ENCODE measurements at regions of chr12 and their contacts with region 1.

Region 1: GRCh38 chr12:26651566-26652188 is 181.3 kb downstream of the ITPR2 start:
- DNase-seq: no peak
- ATAC-seq: peak; percentile 61 to 77
- H3K4me3 ChIP-seq: no peak overlapping the region
- H3K27ac ChIP-seq: no peak overlapping the region
- H3K4me1 ChIP-seq: no peaks in the 10 kb centered on the region
- H3K27me3 ChIP-seq: no peaks in the 10 kb centered on the region

Region 2: DNA sequence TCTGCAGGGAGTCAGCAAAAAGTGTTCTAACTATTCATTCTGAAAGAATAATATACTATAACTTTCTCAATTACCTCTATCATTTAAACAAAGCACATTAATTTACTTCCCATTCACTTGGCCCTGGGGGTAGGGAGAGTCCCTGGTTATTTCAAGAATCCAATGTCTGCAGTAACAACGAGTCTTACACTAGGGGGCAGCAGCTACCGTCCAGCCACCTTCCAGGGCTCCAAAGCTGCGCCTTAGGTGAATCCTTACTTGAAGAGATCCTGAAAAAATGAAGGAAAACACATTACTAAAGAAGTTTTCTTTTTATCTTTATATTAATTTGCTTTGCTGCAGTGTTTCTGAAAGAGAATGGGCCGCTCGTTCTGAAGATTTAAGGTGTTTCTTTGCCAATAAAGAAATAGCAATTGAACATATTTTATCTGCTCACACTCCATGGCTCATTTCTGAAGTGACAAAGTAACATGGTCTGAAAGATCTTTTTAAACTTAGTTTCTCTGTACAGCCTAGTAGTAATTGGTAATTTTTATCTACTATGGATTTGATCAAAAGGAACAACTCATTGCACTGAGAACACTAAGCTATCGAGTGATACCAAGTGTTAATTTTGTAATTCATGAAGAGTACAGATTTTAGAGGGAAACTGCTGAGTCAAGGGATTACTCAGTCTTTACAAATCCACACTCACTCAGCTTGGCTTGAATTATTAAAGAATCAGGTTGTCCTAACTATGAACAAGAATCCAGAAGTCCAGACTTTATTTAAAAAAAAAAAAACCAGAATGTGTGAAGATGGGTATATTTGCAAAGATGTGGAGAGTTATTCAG is 554.4 kb before region 1 on chr12:
- intact Hi-C with region 1: loop called in 3 of 4 experiments (anchors 5 to 10 kb)
- DNase-seq: peak; percentile 64 to 81 (median 73)
- ATAC-seq: peak; percentile 94 to 95
- H3K4me3 ChIP-seq: no peak overlapping the region
- H3K27ac ChIP-seq: no peak overlapping the region
- H3K4me1 ChIP-seq: no peaks in the 10 kb centered on the region
- H3K27me3 ChIP-seq: no peaks in the 10 kb centered on the region

Region 3: GRCh38 chr12:26434299-26435068 is 217.2 kb before region 1 on chr12:
- intact Hi-C with region 1: loop called in 1 of 4 experiments (anchors 10 kb)
- DNase-seq: no peak
- ATAC-seq: peak; percentile 57 to 60
- H3K4me3 ChIP-seq: no peak overlapping the region
- H3K27ac ChIP-seq: no peak overlapping the region
- H3K4me1 ChIP-seq: no peaks in the 10 kb centered on the region
- H3K27me3 ChIP-seq: no peaks in the 10 kb centered on the region

Region 4: GRCh38 chr12:26443309-26443708 is 208.4 kb before region 1 on chr12:
- intact Hi-C with region 1: loop called in 2 of 4 experiments (anchors 10 kb)
- DNase-seq: no peak
- ATAC-seq: no peak
- H3K4me3 ChIP-seq: no peak overlapping the region
- H3K27ac ChIP-seq: no peak overlapping the region
- H3K4me1 ChIP-seq: no peaks in the 10 kb centered on the region
- H3K27me3 ChIP-seq: no peaks in the 10 kb centered on the region